ENCODE measurements at regions of chr17 and their contacts with region 1.

Region 1: GRCh38 chr17:34146440-34147043 is 108.5 kb upstream of the CCL2 start:
- DNase-seq: no peak
- H3K4me3 ChIP-seq: no peak overlapping the region
- H3K27ac ChIP-seq: no peak overlapping the region
- H3K4me1 ChIP-seq: no peaks in the 10 kb centered on the region
- H3K27me3 ChIP-seq: peaks cover 0 to 38% (median 0%) of the 10 kb centered on the region in 4 donors
- CTCF ChIP-seq: peak; percentile 24 to 91 (median 80)
- POLR2A ChIP-seq: no peak

Region 2: DNA sequence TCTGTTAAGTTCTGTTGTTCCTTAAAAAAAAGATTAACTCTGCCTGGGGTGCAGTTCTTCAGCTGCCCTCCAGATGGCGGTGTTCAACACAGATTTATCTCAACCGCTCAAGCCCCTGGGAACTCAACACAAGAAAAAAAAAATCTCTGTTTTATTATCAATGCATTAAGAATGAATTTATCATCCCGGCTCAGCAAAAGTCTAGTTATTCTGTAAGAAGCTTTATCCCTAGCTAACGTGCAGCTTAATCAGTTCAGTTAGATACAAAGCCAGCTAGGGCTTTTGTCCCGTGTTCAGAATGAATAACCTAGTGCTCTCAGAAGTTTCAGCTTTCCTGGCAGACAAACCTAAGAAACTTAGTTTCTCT is 367.3 kb before region 1 on chr17:
- intact Hi-C with region 1: loop called (anchors 5 kb)
- DNase-seq: no peak
- H3K4me3 ChIP-seq: no peak overlapping the region
- H3K27ac ChIP-seq: no peak overlapping the region
- H3K4me1 ChIP-seq: peaks cover 0 to 6% (median 0%) of the 10 kb centered on the region in 3 donors
- H3K27me3 ChIP-seq: peaks cover 0 to 58% (median 0%) of the 10 kb centered on the region in 4 donors
- CTCF ChIP-seq: peak; percentile 90 to 98 (median 93)
- POLR2A ChIP-seq: no peak

Region 3: DNA sequence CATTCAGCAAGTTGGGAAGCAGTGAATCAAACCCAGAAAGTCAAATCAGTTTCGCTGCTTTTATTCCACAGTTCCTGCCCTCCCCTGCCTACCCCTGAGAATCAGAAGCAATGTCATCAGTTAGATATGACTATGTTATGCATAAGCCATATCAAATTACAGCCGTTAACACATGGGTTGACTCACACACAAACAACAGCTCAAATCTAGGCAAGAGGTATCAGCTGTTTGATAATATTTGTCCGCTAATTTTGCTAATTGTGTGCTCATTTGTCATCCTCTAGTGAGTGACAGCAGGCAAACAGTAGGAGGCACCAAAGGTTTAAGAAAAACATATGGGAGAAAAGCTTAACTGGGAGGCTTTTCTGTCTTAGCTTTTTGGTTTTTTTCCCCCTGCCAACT is 218.8 kb before region 1 on chr17:
- intact Hi-C with region 1: loop called (anchors 5 kb)
- DNase-seq: no peak
- H3K4me3 ChIP-seq: no peak overlapping the region
- H3K27ac ChIP-seq: no peak overlapping the region
- H3K4me1 ChIP-seq: peaks cover 0 to 6% (median 0%) of the 10 kb centered on the region in 3 donors
- H3K27me3 ChIP-seq: peaks cover 0 to 41% (median 0%) of the 10 kb centered on the region in 4 donors
- CTCF ChIP-seq: peak in 5 of 6 experiments; percentile 12 to 72 (median 47)
- POLR2A ChIP-seq: no peak